PC-9 (cell line): ENCODE measurements at regions of chr15 and their contacts with region 1.

Region 1: DNA sequence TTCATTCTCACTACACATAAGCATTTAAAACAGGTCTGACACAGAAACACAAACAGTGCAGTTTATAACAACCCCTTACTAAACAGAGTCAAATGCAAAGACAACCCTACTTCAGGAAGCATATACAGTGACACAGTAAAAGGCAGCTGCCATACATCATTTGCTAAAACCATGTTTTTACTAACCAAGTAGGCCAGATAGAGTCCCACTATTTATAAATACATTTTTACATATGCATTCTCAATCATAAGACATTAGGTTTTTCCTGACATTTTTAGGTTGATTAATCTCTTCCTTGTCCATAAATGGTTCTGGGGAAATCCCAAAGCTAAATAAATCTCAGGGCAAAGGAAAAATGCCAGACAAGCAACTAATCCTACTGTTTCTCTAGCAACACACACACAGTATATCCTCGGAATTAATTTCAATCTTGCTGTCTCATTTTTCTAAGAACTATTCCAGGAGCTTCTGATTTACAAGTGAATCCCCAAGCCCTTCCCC is 39.0 kb downstream of the CHAC1 start:
- DNase-seq: no peak
- H3K4me3 ChIP-seq: no peak overlapping the region
- H3K27ac ChIP-seq: no peak overlapping the region
- H3K4me1 ChIP-seq: no peaks in the 10 kb centered on the region
- H3K27me3 ChIP-seq: no peaks in the 10 kb centered on the region
- CTCF ChIP-seq: no peak

Region 2: DNA sequence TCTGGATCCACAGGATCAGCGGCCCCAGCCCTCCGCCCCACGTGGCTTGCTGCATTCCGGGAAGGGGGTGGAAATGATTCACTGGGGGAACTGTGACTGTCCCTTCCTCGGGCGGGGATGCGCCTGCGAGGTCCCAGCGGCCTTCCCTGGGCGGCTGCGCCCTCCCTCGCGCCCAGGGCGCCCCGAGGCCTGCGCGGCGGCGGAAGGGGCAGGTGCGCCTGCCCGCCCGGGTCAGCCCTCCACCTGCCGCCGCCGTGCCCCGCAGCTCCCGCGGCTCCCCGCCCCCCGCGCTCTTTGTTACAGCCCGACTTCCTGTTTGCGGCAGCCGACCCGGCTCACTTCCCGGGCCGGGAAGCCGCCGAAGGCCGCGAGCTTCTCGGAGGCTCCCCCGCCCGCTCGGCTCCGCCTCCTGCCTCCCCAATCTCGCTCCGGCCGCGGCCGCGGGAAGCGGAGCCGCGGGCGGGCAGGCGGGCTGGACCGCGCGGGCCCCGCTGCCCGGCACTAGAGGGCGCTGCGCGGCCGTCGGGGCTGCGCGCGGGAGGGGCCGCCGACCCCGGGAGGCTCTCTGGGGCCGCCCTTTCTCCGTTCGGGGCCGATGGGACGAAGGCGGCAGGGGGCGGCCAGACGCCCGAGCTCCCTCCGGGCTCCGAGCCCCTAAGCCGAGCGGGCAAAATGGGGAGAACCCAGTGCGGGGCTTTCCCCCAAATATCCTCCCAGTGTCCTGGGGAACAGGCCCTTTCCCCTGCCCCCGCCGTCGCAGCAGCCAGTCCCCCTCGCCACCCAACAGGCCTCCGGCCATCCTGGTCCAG is 50.6 kb before region 1 on chr15:
- CTCF ChIA-PET with region 1: no interaction called
- POLR2A ChIA-PET with region 1: interaction called, 30 read pairs
- intact Hi-C with region 1: no loop called
- DNase-seq: peak; percentile 55 to 82
- H3K4me3 ChIP-seq: peak overlapping the region; percentile 64; the same call in 1 of the 2 replicates
- H3K27ac ChIP-seq: peak overlapping the region; percentile 32; the same call in 1 of the 2 replicates
- H3K4me1 ChIP-seq: 0 out of 2 replicates have a peak, but pooled peaks cover 6% of the 10 kb centered on the region
- H3K27me3 ChIP-seq: no peaks in the 10 kb centered on the region
- CTCF ChIP-seq: peak; percentile 36; the same call in 1 of the 2 replicates

Region 3: DNA sequence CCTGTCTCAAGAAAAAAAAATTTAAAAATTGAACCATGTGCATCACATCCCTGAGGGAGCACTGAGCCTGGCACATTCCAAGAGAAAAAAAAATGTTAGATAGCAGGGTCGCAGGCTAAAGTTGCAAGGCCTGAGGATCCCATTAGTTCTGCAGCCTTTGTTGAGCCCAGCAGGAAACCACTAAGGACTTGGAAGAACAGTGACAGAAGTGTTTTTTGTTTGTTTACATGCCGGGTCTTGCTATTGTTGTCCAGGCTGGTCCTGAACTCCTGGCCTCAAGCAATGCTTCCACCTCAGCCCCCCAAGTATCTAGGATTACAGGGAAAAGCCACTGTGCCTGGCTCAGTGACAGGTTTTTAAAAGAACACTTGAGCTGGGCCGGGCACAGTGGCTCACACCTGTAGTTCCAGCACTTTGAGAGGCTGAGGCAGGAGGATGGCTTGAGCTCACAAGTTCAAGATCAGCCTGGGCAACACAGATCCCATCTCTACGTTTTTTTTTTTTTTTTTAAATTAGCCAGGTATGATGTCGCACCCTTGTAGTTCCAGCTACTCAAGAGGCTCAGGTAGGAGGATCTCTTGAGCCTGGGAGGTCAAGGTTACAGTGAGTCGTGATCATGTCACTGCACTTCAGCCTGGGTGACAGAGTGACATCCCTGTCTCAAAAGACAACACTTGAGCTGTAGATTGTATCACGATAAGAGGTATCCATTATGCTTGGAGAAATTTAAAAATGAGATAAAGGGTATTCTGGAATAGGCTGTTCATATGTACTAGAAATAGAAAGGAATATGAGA is 23.8 kb before region 1 on chr15:
- CTCF ChIA-PET with region 1: no interaction called
- POLR2A ChIA-PET with region 1: interaction called, 33 read pairs
- intact Hi-C with region 1: no loop called
- DNase-seq: no peak
- H3K4me3 ChIP-seq: no peak overlapping the region
- H3K27ac ChIP-seq: no peak overlapping the region
- H3K4me1 ChIP-seq: no peaks in the 10 kb centered on the region
- H3K27me3 ChIP-seq: no peaks in the 10 kb centered on the region
- CTCF ChIP-seq: no peak